Activated CD4-positive, alpha-beta T cell treated with anti-CD3 and anti-CD28 coated beads, Interleukin-2, amount 10 ng/mL, durations not matched to agents 24 days and 14 days (primary cell): ENCODE measurements at regions of chr2 and their contacts with region 1.

Region 1: GRCh38 chr2:237700512-237701032 is 73.2 kb downstream of the LRRFIP1 start:
- DNase-seq: peak; percentile 93
- H3K4me3 Mint-ChIP-seq: peak overlapping the region; percentile 87
- H3K27ac Mint-ChIP-seq: peak overlapping the region; percentile 99
- H3K4me1 Mint-ChIP-seq: peaks cover 84% of the 10 kb centered on the region
- H3K27me3 Mint-ChIP-seq: no peaks in the 10 kb centered on the region

Region 2: DNA sequence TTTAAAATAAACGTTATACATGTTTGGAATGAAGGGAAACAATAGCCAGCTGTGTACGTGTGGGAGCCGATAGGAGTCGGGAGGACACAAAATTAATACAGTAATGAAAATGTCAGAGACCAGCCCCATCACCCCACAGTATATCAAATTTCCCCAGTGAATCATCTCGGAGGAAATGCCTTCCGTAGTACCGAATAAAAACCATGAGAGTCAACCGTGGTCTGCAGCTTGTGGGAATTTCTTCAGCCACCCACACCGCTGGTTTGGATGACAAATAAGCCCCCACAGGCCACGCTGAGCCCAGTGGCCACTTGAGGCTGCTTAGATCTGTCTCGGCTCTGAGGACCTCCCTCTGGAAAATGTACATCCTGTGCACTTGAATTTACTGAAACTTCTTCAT is 420.3 kb before region 1 on chr2:
- intact Hi-C with region 1: no loop called
- DNase-seq: no peak
- H3K4me3 Mint-ChIP-seq: no peak overlapping the region
- H3K27ac Mint-ChIP-seq: no peak overlapping the region
- H3K4me1 Mint-ChIP-seq: no peaks in the 10 kb centered on the region
- H3K27me3 Mint-ChIP-seq: peaks cover 3% of the 10 kb centered on the region

Region 3: GRCh38 chr2:237685408-237685807 is 15.2 kb before region 1 on chr2:
- intact Hi-C with region 1: loop called (anchors 2 kb)
- DNase-seq: no peak
- H3K4me3 Mint-ChIP-seq: no peak overlapping the region
- H3K27ac Mint-ChIP-seq: no peak overlapping the region
- H3K4me1 Mint-ChIP-seq: peaks cover 40% of the 10 kb centered on the region
- H3K27me3 Mint-ChIP-seq: no peaks in the 10 kb centered on the region

Region 4: GRCh38 chr2:237731663-237732062 is 31.1 kb after region 1 on chr2:
- intact Hi-C with region 1: loop called (anchors 1 kb)
- DNase-seq: no peak
- H3K4me3 Mint-ChIP-seq: peak overlapping the region; percentile 63
- H3K27ac Mint-ChIP-seq: peak overlapping the region; percentile 57
- H3K4me1 Mint-ChIP-seq: peaks cover 41% of the 10 kb centered on the region
- H3K27me3 Mint-ChIP-seq: no peaks in the 10 kb centered on the region

Region 5: GRCh38 chr2:237744613-237745249 is 44.2 kb after region 1 on chr2:
- intact Hi-C with region 1: loop called (anchors 2 kb)
- DNase-seq: peak; percentile 94
- H3K4me3 Mint-ChIP-seq: no peak overlapping the region
- H3K27ac Mint-ChIP-seq: peak overlapping the region; percentile 80
- H3K4me1 Mint-ChIP-seq: peaks cover 29% of the 10 kb centered on the region
- H3K27me3 Mint-ChIP-seq: no peaks in the 10 kb centered on the region

Region 6: DNA sequence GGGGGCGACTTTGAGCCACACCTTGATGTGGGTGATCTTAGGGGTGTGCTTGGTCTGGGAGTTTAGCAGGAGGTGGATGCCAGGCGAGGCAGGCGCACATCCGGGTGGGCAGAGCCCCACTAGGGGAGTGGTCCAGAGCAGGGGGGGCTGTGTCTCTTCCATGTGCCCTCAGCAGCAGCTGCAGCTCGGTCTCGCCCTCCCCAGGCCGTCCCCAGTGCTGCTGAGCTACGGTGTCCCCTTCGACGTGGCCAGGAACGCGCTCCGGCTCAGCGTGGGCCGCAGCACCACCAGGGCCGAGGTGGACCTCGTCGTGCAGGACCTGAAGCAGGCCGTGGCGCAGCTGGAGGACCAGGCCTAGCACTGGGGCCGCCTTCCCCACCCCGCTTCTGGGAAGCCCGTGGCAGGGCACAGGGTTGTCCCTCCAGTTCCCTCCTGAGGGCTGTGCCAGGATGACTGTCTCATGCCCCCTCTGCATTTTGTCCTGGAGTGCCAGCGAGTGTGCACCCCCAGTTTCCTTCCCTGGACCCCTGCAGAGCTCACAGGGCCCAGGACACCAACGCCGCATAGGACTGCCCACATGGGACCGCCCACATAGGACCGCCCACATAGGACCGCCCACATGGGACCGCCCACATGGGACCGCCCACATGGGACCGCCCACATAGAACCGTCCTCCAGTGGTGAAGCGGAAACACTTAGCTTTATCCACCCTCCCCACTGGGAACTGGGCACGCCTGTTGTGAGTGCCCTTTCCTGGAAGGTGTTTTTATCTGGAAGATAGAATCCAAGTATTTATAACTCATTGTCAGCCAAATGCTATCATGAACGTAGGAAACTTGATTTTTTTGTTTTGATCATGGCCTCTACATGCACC is 397.7 kb after region 1 on chr2:
- intact Hi-C with region 1: no loop called
- DNase-seq: peak; percentile 71
- H3K4me3 Mint-ChIP-seq: no peak overlapping the region
- H3K27ac Mint-ChIP-seq: peak overlapping the region; percentile 85
- H3K4me1 Mint-ChIP-seq: peaks cover 11% of the 10 kb centered on the region
- H3K27me3 Mint-ChIP-seq: no peaks in the 10 kb centered on the region

Region 7: DNA sequence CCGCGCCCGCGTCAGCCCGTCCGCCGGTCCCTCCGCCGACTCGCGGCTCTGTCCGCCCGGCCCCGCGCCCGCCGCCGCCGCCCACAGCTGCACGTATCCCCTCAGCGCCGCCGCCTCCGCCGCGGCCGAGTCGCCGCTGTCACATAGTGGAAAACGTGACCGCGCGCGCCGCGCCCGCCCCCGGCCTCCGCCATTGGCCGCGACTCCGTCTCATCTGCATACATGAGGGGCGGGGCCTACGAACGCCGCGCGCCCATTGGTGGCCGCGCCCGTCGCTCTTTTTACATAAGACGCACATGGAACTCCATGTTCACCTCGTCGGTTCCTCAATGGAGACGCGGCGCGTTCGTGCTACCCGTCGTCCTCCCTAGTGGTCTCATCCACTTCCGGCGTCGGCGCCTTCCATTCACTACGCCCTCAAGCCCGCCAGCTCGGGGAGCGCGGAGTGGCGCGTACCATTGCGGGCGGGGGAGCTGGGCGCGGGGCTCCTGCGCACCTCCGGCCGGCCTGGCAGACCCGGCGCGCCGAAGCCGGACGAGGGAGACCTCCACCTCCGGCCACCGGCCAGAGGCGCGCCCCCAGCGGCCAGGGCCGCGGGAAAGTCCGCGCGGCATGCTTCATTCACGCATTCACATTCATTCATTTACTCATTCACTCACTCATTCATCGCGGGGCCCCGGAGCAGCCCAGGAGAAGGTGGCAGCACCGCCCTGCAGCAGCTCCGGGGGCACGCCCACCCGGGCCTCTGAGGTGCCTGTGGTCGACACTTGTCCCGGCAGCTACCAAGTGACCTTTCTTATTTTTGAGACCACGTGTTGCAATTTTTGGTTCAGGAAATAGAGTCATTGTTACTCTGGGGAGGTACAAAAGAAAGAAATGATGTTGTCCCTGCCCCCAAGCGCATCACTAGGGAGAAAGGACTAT is 588.3 kb after region 1 on chr2:
- intact Hi-C with region 1: loop called (anchors 5 kb)
- DNase-seq: peak; percentile 99
- H3K4me3 Mint-ChIP-seq: peak overlapping the region; percentile 93
- H3K27ac Mint-ChIP-seq: peak overlapping the region; percentile 99
- H3K4me1 Mint-ChIP-seq: peaks cover 25% of the 10 kb centered on the region
- H3K27me3 Mint-ChIP-seq: no peaks in the 10 kb centered on the region